Activated CD8-positive, alpha-beta memory T cell treated with anti-CD3 and anti-CD28 coated beads, Interleukin-2, amount 10 ng/mL, durations not matched to agents 7 days and 5 days (primary cell): ENCODE measurements at regions of chr20 and their contacts with region 1.

Region 1: GRCh38 chr20:31496761-31497295 is 17.4 kb upstream of the HM13 start:
- DNase-seq: no peak
- ATAC-seq: no peak
- H3K4me3 Mint-ChIP-seq: no peak overlapping the region
- H3K27ac Mint-ChIP-seq: no peak overlapping the region
- H3K4me1 Mint-ChIP-seq: no peaks in the 10 kb centered on the region
- H3K27me3 Mint-ChIP-seq: peaks cover 25% of the 10 kb centered on the region

Region 2: GRCh38 chr20:31403886-31404285 is 92.9 kb before region 1 on chr20:
- CTCF ChIA-PET with region 1: no interaction called
- DNase-seq: no peak
- ATAC-seq: no peak
- H3K4me3 Mint-ChIP-seq: no peak overlapping the region
- H3K27ac Mint-ChIP-seq: no peak overlapping the region
- H3K4me1 Mint-ChIP-seq: no peaks in the 10 kb centered on the region
- H3K27me3 Mint-ChIP-seq: no peaks in the 10 kb centered on the region

Region 3: DNA sequence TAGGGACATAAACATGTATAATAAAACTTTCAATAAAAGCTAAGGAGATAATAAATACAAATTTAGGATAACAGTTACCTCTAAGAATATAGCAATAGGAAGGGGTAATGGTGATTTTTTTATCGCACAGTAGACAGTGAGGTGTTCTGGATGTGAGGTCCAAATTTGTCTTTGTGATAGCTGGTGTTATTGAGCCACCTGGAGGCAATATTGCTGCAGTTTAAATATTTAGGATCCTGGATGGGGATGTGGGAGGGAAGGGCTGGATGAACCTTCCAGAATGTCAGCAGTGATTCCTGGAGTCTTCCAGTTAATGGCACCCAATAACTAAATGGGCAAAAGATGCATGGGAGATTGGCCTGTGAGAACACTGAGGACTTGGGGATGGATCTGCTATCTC is 42.5 kb before region 1 on chr20:
- CTCF ChIA-PET with region 1: interaction called, 59 read pairs
- DNase-seq: no peak
- ATAC-seq: no peak
- H3K4me3 Mint-ChIP-seq: no peak overlapping the region
- H3K27ac Mint-ChIP-seq: no peak overlapping the region
- H3K4me1 Mint-ChIP-seq: no peaks in the 10 kb centered on the region
- H3K27me3 Mint-ChIP-seq: peaks cover 8% of the 10 kb centered on the region

Region 4: DNA sequence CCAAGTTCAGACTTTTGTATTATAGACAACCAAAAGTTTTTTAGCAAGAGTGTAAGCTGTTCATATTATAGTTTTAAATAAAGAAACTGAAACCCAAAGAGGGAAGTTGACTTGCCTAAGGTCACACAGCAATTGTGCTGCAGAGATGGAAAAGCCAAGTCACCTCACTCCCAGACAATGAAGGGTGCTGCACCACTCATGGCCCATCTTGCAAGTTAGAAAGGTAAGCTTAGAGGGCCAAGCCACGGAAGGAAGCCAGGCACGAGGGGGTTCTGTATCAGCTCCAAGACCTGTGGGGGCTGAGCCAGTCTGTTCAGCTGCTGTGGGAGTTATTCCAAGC is 22.8 kb before region 1 on chr20:
- CTCF ChIA-PET with region 1: interaction called, 11 read pairs
- DNase-seq: no peak
- ATAC-seq: no peak
- H3K4me3 Mint-ChIP-seq: no peak overlapping the region
- H3K27ac Mint-ChIP-seq: no peak overlapping the region
- H3K4me1 Mint-ChIP-seq: no peaks in the 10 kb centered on the region
- H3K27me3 Mint-ChIP-seq: peaks cover 42% of the 10 kb centered on the region

Region 5: DNA sequence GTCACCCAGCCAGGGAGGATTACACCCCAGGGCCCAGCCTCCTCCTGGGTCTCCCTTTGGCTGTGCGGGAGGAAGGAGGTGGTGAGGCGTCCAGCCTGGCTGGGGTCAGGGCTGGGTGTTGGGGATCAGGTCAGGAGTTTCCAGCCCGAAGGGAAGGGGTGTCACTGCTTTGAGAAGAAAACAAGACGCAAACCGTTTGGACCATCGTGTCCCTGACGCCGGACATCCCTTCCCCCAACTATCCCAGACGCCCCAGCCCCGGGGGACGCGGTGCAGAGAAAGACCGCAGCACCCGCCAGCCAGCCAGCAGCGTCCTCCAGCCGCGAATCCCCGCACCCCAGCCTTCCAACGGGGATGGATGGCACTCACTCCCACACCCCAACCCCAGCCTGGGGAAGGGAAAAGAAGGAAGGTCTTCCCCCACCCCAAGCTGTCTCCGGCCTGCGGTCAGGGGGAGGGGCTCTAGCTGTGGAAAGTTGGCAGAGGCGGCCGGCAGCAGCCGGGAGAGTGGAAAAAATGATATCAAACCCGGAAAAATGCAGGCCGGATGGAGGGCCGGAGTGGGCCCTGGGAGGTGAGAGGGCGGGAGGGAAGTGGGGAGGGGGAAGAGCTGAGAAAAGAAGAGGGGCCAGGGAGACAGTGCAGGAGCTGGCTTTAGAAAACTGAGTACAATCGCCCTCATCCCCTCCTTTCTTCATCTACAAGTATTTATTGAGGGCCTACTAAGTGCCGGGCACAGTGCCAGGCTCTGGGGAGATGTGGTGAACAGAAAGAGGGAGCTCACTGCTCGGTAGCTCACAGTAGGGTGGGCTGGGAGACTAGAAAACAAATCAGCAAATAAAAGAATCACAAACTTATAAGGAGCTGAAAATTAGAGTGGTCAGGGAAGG is 11.1 kb before region 1 on chr20:
- CTCF ChIA-PET with region 1: interaction called, 42 read pairs
- DNase-seq: no peak
- ATAC-seq: no peak
- H3K4me3 Mint-ChIP-seq: no peak overlapping the region
- H3K27ac Mint-ChIP-seq: no peak overlapping the region
- H3K4me1 Mint-ChIP-seq: no peaks in the 10 kb centered on the region
- H3K27me3 Mint-ChIP-seq: peaks cover 36% of the 10 kb centered on the region

Region 6: DNA sequence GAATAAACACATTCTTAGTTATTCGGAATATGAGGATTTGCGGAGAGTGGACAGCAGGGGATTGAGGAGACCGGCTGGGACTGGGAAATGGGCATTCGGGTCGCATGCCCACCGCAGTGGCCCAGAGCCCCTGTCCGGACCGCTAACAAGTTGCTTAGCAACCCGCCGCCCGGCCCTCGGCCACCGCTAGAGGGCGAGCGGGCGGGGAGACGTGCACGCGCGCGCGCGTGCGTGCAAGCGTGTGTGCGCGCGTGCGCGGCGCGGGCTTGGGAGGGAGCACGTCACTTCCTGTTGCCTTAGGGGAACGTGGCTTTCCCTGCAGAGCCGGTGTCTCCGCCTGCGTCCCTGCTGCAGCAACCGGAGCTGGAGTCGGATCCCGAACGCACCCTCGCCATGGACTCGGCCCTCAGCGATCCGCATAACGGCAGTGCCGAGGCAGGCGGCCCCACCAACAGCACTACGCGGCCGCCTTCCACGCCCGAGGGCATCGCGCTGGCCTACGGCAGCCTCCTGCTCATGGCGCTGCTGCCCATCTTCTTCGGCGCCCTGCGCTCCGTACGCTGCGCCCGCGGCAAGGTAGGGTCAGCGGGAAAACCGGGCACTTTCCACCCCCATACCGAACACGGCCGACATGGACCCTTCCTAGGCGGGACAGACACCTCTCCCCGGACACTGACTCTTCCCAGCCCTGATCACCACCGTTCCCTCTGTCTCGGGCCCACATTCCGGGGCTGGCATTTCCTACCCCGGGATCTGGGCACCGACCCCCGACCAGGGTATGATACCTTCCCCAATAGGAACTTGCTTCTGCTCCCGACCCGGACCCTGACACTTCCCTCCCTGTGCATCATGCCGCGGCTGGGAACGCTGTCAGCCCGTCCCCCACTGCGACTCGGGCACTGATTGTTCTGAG is 17.6 kb after region 1 on chr20 and contains the start of gene HM13:
- CTCF ChIA-PET with region 1: interaction called, 27 read pairs
- DNase-seq: peak; percentile 91
- ATAC-seq: peak; percentile 81
- H3K4me3 Mint-ChIP-seq: no peak within 1 kb of the TSS
- H3K27ac Mint-ChIP-seq: peak within 1 kb of the TSS; percentile 63
- H3K4me1 Mint-ChIP-seq: peaks cover 8% of the 10 kb centered on the region
- H3K27me3 Mint-ChIP-seq: no peaks in the 10 kb centered on the region
- total RNA-seq, gene HM13: 151 to 152 TPM

Region 7: GRCh38 chr20:31527266-31527665 is 30.4 kb after region 1 on chr20:
- CTCF ChIA-PET with region 1: no interaction called
- DNase-seq: no peak
- ATAC-seq: no peak
- H3K4me3 Mint-ChIP-seq: no peak overlapping the region
- H3K27ac Mint-ChIP-seq: no peak overlapping the region
- H3K4me1 Mint-ChIP-seq: peaks cover 9% of the 10 kb centered on the region
- H3K27me3 Mint-ChIP-seq: no peaks in the 10 kb centered on the region

Region 8: GRCh38 chr20:31560094-31560899 is 63.5 kb after region 1 on chr20:
- CTCF ChIA-PET with region 1: interaction called, 11 read pairs
- DNase-seq: peak; percentile 83
- ATAC-seq: peak; percentile 71
- H3K4me3 Mint-ChIP-seq: no peak overlapping the region
- H3K27ac Mint-ChIP-seq: peak overlapping the region; percentile 82
- H3K4me1 Mint-ChIP-seq: peaks cover 17% of the 10 kb centered on the region
- H3K27me3 Mint-ChIP-seq: no peaks in the 10 kb centered on the region

Region 9: GRCh38 chr20:31605031-31605901 is 108.4 kb after region 1 on chr20 and contains the start of gene ID1:
- CTCF ChIA-PET with region 1: no interaction called
- DNase-seq: peak; percentile 89
- ATAC-seq: peak; percentile 89
- H3K4me3 Mint-ChIP-seq: peak within 1 kb of the TSS; percentile 78
- H3K27ac Mint-ChIP-seq: peak within 1 kb of the TSS; percentile 47
- H3K4me1 Mint-ChIP-seq: peaks cover 30% of the 10 kb centered on the region
- H3K27me3 Mint-ChIP-seq: peaks cover 75% of the 10 kb centered on the region
- total RNA-seq, gene ID1: not detected